Dorsolateral prefrontal cortex (tissue), 120 donors: ENCODE measurements at regions of chr2 and their contacts with region 1.

Region 1: GRCh38 chr2:121136323-121136722 is 148.7 kb downstream of the TFCP2L1 start:
- DNase-seq: no peak
- H3K4me3 ChIP-seq: no peak overlapping the region
- H3K27ac ChIP-seq: no peak overlapping the region
- H3K27me3 ChIP-seq: peaks cover 0 to 13% (median 0%) of the 10 kb centered on the region in 45 donors
- CTCF ChIP-seq: no peak

Region 2: GRCh38 chr2:121159291-121160071 is 23.2 kb after region 1 on chr2:
- intact Hi-C with region 1: loop called in 1 of 2 experiments (anchors 2 kb)
- DNase-seq: no peak
- H3K4me3 ChIP-seq: no peak overlapping the region
- H3K27ac ChIP-seq: no peak overlapping the region
- H3K27me3 ChIP-seq: no peaks in the 10 kb centered on the region
- CTCF ChIP-seq: no peak

Region 3: GRCh38 chr2:121171625-121172119 is 35.3 kb after region 1 on chr2:
- intact Hi-C with region 1: no loop called
- DNase-seq: no peak
- H3K4me3 ChIP-seq: no peak overlapping the region
- H3K27ac ChIP-seq: no peak overlapping the region
- H3K27me3 ChIP-seq: peaks cover 0 to 2% (median 0%) of the 10 kb centered on the region in 45 donors
- CTCF ChIP-seq: no peak